ENCODE measurements at regions of chr2 and their contacts with region 1.

Region 1: DNA sequence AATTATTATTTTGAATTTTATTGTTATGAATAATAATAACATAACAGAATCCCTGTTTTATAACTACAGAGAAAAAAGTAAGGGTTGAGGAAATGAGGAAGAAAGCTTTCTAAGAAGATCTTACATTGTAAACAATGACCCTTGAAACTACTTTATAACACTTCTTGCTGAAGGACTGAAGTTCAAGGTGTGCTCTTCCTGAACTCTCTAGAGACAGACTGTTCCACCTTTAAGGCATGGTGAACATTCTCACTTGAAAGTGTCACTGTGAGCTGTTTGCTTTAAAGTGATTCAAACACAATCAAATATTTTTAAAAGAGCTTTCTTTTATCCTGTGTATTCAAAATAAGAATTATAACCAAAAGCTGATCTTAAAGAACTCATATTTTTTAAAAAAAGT is 131.5 kb downstream of the DNAH7 start:
- DNase-seq: no peak
- H3K4me3 ChIP-seq: no peak overlapping the region
- CTCF ChIP-seq: no peak

Region 2: DNA sequence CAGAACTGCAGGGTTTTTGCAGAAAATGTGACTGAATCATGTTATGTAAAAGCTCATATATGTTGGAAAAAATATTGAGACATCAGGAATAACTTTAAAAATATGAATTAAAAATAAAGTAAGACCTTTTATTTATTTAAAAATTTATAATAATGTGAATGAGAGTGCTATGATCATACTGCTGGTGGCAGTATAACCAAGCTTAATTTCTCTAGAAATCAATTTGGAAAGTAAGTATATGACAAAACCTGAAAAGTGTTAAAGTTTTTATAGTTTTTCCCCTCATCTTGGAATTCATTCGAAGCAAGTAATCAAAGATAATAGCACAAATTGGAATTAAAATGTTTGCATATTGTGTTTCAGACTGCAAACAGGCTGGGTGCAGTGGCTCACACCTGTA is 272.6 kb before region 1 on chr2:
- CTCF ChIA-PET with region 1: interaction called, 214 read pairs
- POLR2A ChIA-PET with region 1: interaction called, 4 read pairs
- DNase-seq: no peak
- H3K4me3 ChIP-seq: no peak overlapping the region
- CTCF ChIP-seq: no peak